Upper lobe of right lung (tissue), 1 donor: ENCODE measurements at regions of chr1 and their contacts with region 1.

Region 1: DNA sequence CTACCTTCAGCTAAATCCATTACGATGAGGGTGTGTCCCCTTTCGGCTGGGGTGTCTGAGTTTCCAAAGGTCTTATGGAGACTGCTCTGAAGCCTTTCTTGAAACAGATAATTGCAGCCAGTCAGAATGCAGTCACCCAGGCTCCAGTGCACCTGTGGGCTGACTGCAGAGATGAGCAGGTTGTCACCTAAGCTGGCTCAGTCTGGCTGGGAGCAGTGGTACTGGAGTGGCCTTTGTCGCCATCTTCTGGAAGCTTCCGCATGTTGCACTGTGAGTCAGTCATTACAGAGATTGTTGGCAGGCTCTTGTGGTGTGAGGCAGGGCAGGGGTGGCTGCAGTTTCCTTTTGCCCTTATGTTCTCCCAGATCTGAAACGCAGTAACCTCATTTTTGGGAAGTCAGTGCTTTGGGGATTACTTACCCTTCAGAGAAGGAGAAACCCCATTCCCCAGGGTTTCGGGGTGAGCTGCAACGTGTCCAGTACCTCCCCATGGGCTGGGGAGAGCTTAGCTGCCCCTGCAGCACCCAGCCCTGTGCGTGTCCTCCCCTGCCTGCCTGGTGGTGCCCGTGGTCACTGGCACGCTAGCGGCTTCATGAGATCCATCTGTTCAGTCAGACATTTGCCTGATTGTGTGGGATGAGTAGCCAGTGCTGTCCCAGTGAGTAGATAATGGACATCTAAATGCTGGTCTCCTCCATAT is 48.0 kb downstream of the SMYD2 start:
- DNase-seq: peak; percentile 80
- ATAC-seq: peak; percentile 93
- H3K4me3 ChIP-seq: no peak overlapping the region
- H3K27ac ChIP-seq: no peak overlapping the region
- H3K4me1 ChIP-seq: no peaks in the 10 kb centered on the region
- H3K27me3 ChIP-seq: no peaks in the 10 kb centered on the region
- CTCF ChIP-seq: peak; percentile 87

Region 2: GRCh38 chr1:214107322-214108096 is 221.4 kb before region 1 on chr1:
- intact Hi-C with region 1: no loop called
- DNase-seq: no peak
- ATAC-seq: peak; percentile 30
- H3K4me3 ChIP-seq: peak overlapping the region; percentile 29
- H3K27ac ChIP-seq: no peak overlapping the region
- H3K4me1 ChIP-seq: no peaks in the 10 kb centered on the region
- H3K27me3 ChIP-seq: no peaks in the 10 kb centered on the region
- CTCF ChIP-seq: no peak

Region 3: GRCh38 chr1:214271174-214271858 is 57.6 kb before region 1 on chr1:
- intact Hi-C with region 1: loop called (anchors 10 kb)
- DNase-seq: no peak
- ATAC-seq: no peak
- H3K4me3 ChIP-seq: no peak overlapping the region
- H3K27ac ChIP-seq: no peak overlapping the region
- H3K4me1 ChIP-seq: no peaks in the 10 kb centered on the region
- H3K27me3 ChIP-seq: peaks cover 47% of the 10 kb centered on the region
- CTCF ChIP-seq: no peak

Region 4: GRCh38 chr1:214402613-214403083 is 73.7 kb after region 1 on chr1:
- intact Hi-C with region 1: no loop called
- DNase-seq: no peak
- ATAC-seq: no peak
- H3K4me3 ChIP-seq: no peak overlapping the region
- H3K27ac ChIP-seq: no peak overlapping the region
- H3K4me1 ChIP-seq: peaks cover 5% of the 10 kb centered on the region
- H3K27me3 ChIP-seq: no peaks in the 10 kb centered on the region
- CTCF ChIP-seq: no peak

Region 5: DNA sequence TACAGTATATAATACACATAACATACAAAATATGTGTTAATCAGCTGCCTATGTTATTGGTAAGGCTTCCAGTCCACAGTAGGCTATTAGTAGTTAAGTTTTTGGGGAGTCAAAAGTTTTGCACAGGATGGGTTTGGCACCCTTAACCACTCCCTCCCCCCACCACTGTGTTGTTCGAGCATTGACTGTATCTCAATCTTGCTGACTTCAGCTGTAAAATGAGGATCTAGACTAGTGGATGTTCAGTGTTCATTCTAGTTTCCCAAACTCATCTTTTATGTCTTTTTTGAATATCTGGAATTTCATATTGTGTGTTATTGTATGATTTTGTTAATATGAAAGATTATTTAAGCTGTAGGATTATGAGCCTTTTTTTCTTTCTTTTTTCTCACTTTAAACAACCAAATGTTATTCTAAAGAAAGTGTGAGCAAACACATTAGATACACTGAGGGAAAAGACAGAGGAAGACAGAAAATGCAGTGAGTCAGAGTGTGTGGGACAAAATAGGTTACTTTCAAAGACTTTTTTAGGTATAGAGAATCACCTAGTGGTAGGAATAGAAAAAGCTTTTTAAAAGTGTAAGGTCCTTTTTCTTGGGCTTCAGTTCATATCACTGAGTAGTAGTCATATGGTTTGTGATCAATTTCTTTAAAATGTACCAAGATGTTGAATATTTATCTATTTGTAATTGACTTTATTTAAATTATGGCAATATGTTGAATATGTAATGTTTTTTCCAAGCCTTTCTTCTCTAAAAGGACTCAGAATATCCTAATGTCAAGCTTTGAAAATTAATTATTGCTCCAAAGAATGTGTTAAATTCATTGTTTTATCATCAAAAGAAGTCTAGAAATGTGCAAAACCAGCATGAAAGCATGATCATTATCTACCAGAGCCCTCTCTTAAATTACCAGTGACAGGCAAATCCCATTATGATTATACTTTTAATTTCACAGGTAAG is 256.2 kb after region 1 on chr1:
- intact Hi-C with region 1: loop called (anchors 10 kb)
- DNase-seq: no peak
- ATAC-seq: peak; percentile 68
- H3K4me3 ChIP-seq: no peak overlapping the region
- H3K27ac ChIP-seq: no peak overlapping the region
- H3K4me1 ChIP-seq: no peaks in the 10 kb centered on the region
- H3K27me3 ChIP-seq: no peaks in the 10 kb centered on the region
- CTCF ChIP-seq: peak; percentile 66